ENCODE measurements at regions of chr5 and their contacts with region 1.

Region 1: DNA sequence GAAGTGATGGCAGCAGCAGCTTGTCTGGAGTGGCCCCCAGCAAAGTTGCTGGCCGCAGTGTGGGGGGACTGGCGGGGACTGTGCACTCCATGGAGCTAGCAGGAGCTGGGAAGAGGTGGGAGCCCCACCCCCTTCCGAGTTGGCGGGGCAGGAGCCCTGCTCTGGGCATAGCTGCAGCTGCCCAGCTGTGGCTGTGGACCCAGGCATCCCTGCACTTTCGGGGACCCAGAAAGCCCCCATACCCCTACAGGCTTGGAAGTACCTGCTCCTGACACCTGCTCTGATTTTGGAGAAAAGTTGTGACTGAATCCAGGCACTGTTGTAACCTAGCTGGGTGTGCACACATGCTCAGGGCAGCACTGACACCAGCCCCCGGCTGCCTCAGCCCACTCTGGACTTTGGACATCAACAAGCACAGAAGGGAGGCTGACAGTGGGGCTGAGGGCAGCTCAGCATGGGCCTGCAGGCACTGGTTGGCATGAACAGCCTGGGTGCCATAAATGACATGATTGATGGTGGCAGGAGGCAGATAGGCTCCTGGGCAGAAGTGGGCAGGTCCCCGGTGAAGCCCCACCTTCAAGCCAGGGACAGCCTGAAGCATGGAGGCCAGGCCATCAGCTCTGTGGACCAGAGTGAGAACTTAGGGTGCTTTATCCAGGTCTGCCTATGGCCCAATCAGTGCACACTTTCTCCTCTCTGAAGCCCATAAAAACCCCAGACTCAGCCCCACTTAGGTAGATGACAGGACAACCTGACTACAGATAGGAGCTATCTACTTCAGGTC is 12.6 kb downstream of the LMBRD2 start:
- DNase-seq: no peak
- H3K4me3 ChIP-seq: no peak overlapping the region
- H3K27ac ChIP-seq: no peak overlapping the region
- H3K4me1 ChIP-seq: no peaks in the 10 kb centered on the region
- H3K27me3 ChIP-seq: no peaks in the 10 kb centered on the region
- CTCF ChIP-seq: no peak
- EP300 ChIP-seq: no peak
- POLR2A ChIP-seq: no peak
- RAD21 ChIP-seq: no peak

Region 2: DNA sequence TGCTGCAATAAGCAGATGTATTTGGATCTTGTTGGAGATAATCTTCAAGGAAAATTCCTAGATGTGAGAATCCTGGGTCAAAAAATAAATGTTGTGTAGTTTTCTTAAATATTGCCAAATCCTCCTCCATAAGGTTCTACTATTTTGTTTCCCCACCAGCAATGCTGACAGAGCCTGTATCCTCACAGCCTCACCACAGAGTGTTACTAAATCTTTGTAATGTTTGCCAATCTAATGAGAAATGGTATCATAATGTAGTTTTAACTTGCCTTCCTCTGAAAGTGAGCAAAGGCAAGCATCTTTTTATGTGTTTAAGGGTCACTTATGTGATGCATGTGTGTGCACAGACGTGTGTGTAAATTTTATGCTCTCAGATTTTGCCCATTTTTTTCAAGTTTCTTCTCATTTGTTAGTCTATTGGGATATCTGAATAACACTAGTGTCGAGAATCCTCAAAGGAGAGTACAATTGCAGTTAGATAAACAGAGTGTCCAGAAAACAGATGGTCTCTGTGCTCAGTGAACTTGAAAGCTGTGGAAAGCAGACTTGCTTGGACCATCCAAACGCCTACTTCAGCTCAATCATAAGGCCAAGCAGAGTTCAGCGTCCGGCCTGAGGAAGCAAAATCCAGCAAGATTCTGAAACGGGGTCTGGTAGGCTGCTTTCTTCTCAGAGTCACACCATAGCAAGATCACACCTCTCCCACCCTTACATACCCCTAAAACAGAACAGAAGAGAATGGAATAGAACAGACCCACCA is 112.2 kb before region 1 on chr5:
- CTCF ChIA-PET with region 1: no interaction called
- POLR2A ChIA-PET with region 1: no interaction called
- DNase-seq: no peak
- H3K4me3 ChIP-seq: no peak overlapping the region
- H3K27ac ChIP-seq: no peak overlapping the region
- H3K4me1 ChIP-seq: no peaks in the 10 kb centered on the region
- H3K27me3 ChIP-seq: no peaks in the 10 kb centered on the region
- CTCF ChIP-seq: no peak
- EP300 ChIP-seq: no peak
- POLR2A ChIP-seq: no peak
- RAD21 ChIP-seq: no peak

Region 3: DNA sequence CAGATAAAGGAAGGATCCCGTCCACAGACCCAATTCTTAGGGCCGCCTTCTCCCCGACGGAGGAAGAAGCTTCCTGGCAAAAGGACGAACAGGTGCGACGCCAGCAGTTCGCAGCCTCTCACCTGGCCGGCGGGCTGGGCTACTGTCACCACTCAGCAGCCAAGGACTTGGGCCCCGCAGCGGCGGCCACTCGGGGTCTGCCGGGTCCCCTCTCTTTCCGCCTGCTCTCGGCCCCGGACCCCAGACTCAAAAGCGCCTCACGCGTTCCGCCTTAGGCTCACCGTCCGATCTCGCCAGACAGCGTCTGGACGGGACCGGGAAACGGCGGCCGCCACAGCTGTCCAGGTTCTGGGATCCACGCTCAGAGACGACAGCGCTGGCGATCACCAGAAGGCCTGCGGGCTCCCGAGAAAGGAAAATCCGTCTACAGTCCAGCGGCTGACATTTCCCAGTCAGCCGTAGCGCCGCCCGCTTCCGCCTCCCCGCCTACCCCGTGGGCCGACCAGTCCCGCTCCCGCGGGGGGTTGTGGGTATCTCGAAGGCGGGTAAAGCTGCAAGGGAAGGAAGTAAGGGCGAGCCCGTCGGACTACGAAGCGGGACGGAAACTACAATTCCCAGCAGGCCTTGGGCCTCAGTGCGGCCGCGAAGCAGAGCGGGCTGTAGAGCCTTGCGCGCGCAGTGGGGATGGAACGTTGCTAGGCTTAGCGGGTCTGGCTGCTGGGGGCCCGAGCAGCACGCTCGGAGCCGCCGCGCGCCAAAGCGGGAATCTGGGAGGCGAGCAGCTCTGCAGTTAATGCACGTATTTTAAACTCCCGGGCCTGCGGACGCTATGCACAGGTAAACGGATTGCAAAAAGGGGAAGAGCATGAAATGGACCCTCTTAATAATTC is 12.6 kb after region 1 on chr5 and contains the starts of genes LMBRD2 and SKP2:
- CTCF ChIA-PET with region 1: interaction called, 14 read pairs
- POLR2A ChIA-PET with region 1: interaction called, 13 read pairs
- DNase-seq: peak; percentile 92 to 94
- H3K4me3 ChIP-seq: peak within 1 kb of the TSS; percentile 85 to 90 (median 86)
- H3K27ac ChIP-seq: peak within 1 kb of the TSS; percentile 42; the same call in 1 of the 2 replicates
- H3K4me1 ChIP-seq: peaks cover 0 to 5% (median 2%) of the 10 kb centered on the region in 4 experiments; a peak in 3 of 7 replicates
- H3K27me3 ChIP-seq: no peaks in the 10 kb centered on the region
- CTCF ChIP-seq: no peak
- EP300 ChIP-seq: no peak
- POLR2A ChIP-seq: peak; percentile 56 to 86
- RAD21 ChIP-seq: no peak
- total RNA-seq, gene LMBRD2: 3.9 and 4.1 TPM in 2 replicates
- total RNA-seq, gene SKP2: 104 TPM in 2 replicates